Astrocyte of the cerebellum (primary cell): ENCODE measurements at regions of chr7 and their contacts with region 1.

Region 1: GRCh38 chr7:3309140-3309539 is 8.1 kb downstream of the SDK1 start:
- DNase-seq: no peak
- H3K4me3 ChIP-seq: no peak overlapping the region
- CTCF ChIP-seq: no peak

Region 2: GRCh38 chr7:3338161-3338560 is 29.0 kb after region 1 on chr7:
- in situ Hi-C with region 1: loop called (anchors 5 kb)
- DNase-seq: no peak
- H3K4me3 ChIP-seq: no peak overlapping the region
- CTCF ChIP-seq: no peak

Region 3: GRCh38 chr7:3673524-3673923 is 364.4 kb after region 1 on chr7:
- in situ Hi-C with region 1: no loop called
- DNase-seq: no peak
- H3K4me3 ChIP-seq: no peak overlapping the region
- CTCF ChIP-seq: peak; percentile 31